MCF 10A (cell line): ENCODE measurements at regions of chr7 and their contacts with region 1.

Region 1: GRCh38 chr7:48337012-48337621 is 165.9 kb downstream of the ABCA13 start:
- DNase-seq: peak; percentile 47
- H3K4me3 Mint-ChIP-seq: no peak overlapping the region
- H3K27ac Mint-ChIP-seq: no peak overlapping the region
- H3K4me1 Mint-ChIP-seq: no peaks in the 10 kb centered on the region
- H3K27me3 Mint-ChIP-seq: peaks cover 6% of the 10 kb centered on the region
- CTCF ChIP-seq: peak; percentile 61

Region 2: GRCh38 chr7:48224042-48224441 is 113.1 kb before region 1 on chr7:
- CTCF ChIA-PET with region 1: no interaction called
- POLR2A ChIA-PET with region 1: no interaction called
- intact Hi-C with region 1: no loop called
- DNase-seq: no peak
- H3K4me3 Mint-ChIP-seq: no peak overlapping the region
- H3K27ac Mint-ChIP-seq: no peak overlapping the region
- H3K4me1 Mint-ChIP-seq: no peaks in the 10 kb centered on the region
- H3K27me3 Mint-ChIP-seq: peaks cover 59% of the 10 kb centered on the region
- CTCF ChIP-seq: no peak

Region 3: GRCh38 chr7:48312151-48312550 is 25.0 kb before region 1 on chr7:
- CTCF ChIA-PET with region 1: interaction called, 13 read pairs
- POLR2A ChIA-PET with region 1: no interaction called
- intact Hi-C with region 1: no loop called
- DNase-seq: no peak
- H3K4me3 Mint-ChIP-seq: no peak overlapping the region
- H3K27ac Mint-ChIP-seq: no peak overlapping the region
- H3K4me1 Mint-ChIP-seq: peaks cover 19% of the 10 kb centered on the region
- H3K27me3 Mint-ChIP-seq: no peaks in the 10 kb centered on the region
- CTCF ChIP-seq: no peak

Region 4: GRCh38 chr7:48347881-48348280 is 10.8 kb after region 1 on chr7:
- CTCF ChIA-PET with region 1: interaction called, 14 read pairs
- POLR2A ChIA-PET with region 1: no interaction called
- intact Hi-C with region 1: no loop called
- DNase-seq: no peak
- H3K4me3 Mint-ChIP-seq: no peak overlapping the region
- H3K27ac Mint-ChIP-seq: no peak overlapping the region
- H3K4me1 Mint-ChIP-seq: no peaks in the 10 kb centered on the region
- H3K27me3 Mint-ChIP-seq: no peaks in the 10 kb centered on the region
- CTCF ChIP-seq: no peak

Region 5: GRCh38 chr7:48363174-48363573 is 26.1 kb after region 1 on chr7:
- CTCF ChIA-PET with region 1: interaction called, 11 read pairs
- POLR2A ChIA-PET with region 1: no interaction called
- intact Hi-C with region 1: no loop called
- DNase-seq: no peak
- H3K4me3 Mint-ChIP-seq: no peak overlapping the region
- H3K27ac Mint-ChIP-seq: no peak overlapping the region
- H3K4me1 Mint-ChIP-seq: peaks cover 23% of the 10 kb centered on the region
- H3K27me3 Mint-ChIP-seq: no peaks in the 10 kb centered on the region
- CTCF ChIP-seq: no peak

Region 6: DNA sequence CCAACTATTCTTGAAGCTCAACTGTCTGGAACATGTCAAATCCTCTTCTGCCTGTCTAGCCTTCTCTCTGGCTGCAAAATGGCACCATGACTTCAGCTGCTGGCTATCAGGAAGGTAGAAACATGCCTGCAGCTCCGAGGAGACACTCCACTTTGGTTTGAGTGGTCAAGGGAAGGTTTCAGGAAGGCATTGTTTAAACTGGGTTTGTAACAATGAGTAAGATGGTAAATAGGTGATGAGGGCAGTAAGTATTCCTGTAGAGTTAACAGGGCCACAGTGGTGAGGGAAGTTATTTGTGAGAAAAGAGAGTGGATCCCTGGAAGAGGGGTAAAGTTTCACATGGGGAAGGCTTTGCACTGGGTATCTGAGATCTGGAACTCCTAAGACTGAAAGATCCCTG is 65.6 kb after region 1 on chr7:
- CTCF ChIA-PET with region 1: no interaction called
- POLR2A ChIA-PET with region 1: no interaction called
- intact Hi-C with region 1: no loop called
- DNase-seq: no peak
- H3K4me3 Mint-ChIP-seq: no peak overlapping the region
- H3K27ac Mint-ChIP-seq: no peak overlapping the region
- H3K4me1 Mint-ChIP-seq: no peaks in the 10 kb centered on the region
- H3K27me3 Mint-ChIP-seq: no peaks in the 10 kb centered on the region
- CTCF ChIP-seq: no peak

Region 7: DNA sequence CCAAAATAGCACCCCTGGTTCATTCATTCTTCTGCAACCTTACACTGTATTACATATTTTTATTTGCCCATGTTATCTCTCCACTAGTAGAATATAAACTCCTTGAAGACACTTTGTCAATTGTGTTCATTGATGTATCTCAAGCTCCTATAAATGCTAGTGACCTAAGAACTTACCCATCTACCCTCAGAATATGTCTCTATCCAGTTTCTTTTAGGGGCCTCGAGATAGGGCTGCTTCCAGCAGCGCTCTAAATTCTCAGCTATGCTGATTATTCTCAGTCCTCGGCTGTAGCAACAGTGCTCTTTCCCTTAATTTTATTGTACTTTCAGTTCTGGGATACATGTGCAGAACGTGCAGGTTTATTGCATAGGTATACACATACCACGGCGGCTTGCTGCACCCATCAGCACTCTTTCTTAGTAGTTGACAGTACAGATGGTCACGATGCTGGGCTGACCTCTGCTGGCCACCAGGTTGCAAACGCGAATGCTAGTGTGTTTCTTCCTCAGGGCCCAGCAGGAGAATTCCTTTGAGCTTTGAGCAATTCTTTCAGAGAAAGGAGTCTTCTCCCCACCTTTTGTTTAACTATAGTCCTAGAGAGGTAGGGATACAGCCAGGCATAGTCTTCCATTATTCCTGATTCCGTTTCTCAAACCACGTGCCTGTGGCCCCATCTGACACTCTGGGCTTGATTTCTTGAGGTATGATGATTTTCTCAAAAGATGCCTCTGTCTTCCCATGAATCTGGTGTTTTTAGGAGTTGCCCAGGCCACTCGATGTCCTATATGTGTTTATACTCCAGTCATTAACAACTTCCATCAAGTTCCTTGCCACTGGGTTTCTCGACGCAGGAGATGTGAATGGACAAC is 538.2 kb after region 1 on chr7:
- CTCF ChIA-PET with region 1: interaction called, 10 read pairs
- POLR2A ChIA-PET with region 1: no interaction called
- intact Hi-C with region 1: loop called (anchors 1 kb)
- DNase-seq: peak; percentile 43
- H3K4me3 Mint-ChIP-seq: no peak overlapping the region
- H3K27ac Mint-ChIP-seq: no peak overlapping the region
- H3K4me1 Mint-ChIP-seq: no peaks in the 10 kb centered on the region
- H3K27me3 Mint-ChIP-seq: peaks cover 49% of the 10 kb centered on the region
- CTCF ChIP-seq: peak; percentile 79